Naive thymus-derived CD4-positive, alpha-beta T cell (primary cell): ENCODE measurements at regions of chr6 and their contacts with region 1.

Region 1: DNA sequence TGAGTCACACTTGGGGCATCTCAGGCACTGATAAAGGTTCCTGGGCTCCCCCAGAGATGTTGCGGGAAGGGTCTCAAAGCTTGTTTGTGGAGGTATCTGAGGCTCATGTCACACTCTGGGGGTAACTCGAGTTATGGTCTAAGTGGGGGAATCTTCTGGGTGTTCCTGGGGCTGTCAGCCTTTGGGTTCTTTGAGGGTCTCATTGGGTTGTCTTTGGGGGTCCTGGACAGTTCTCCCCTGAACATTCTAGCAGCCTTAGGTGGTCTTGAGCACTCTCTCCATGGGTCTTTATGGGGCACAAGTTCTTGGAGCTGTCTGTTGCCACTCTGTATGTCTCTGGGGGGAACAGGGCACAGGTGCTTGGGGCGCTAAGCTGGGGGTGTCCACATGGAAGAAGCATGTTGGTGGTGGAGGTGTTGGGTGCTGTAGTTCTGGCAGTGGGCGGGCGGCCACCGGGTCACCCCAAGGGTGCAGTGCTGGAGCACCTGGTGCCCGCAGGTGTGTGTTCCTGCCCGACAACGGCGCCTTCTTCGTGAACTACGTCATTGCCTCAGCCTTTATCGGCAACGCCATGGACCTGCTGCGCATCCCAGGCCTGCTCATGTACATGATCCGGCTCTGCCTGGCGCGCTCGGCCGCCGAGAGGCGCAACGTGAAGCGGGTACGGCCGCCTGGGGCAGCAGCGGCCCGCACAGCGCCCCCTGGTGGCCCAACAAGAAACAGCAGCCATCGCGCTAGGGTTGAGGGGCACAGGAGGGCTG is 7.1 kb upstream of the CAPN11 start:
- DNase-seq: peak; percentile 63 to 88 (median 73)
- ATAC-seq: peak; percentile 94
- H3K4me3 ChIP-seq: no peak overlapping the region
- H3K4me3 Mint-ChIP-seq: peak overlapping the region in 3 of 10 donors; percentile 30 to 42 (median 34)
- H3K27ac ChIP-seq: no peak overlapping the region
- H3K27ac Mint-ChIP-seq: peak overlapping the region in 3 of 9 donors; percentile 5 to 43 (median 34)
- H3K4me1 ChIP-seq: peaks cover 3 to 8% of the 10 kb centered on the region in 2 donors
- H3K4me1 Mint-ChIP-seq: peaks cover 0 to 7% (median 4%) of the 10 kb centered on the region in 7 donors
- H3K27me3 ChIP-seq: no peaks in the 10 kb centered on the region
- H3K27me3 Mint-ChIP-seq: no peaks in the 10 kb centered on the region

Region 2: GRCh38 chr6:44202453-44203279 is 51.1 kb after region 1 on chr6:
- CTCF ChIA-PET with region 1: no interaction called
- POLR2A ChIA-PET with region 1: no interaction called
- intact Hi-C with region 1: no loop called
- DNase-seq: no peak
- ATAC-seq: no peak
- H3K4me3 ChIP-seq: no peak overlapping the region
- H3K4me3 Mint-ChIP-seq: no peak overlapping the region
- H3K27ac ChIP-seq: no peak overlapping the region
- H3K27ac Mint-ChIP-seq: peak overlapping the region in 1 of 9 donors; percentile 62
- H3K4me1 ChIP-seq: no peaks in the 10 kb centered on the region
- H3K4me1 Mint-ChIP-seq: peaks cover 0 to 2% (median 0%) of the 10 kb centered on the region in 7 donors
- H3K27me3 ChIP-seq: no peaks in the 10 kb centered on the region
- H3K27me3 Mint-ChIP-seq: peaks cover 0 to 17% (median 5%) of the 10 kb centered on the region in 5 donors

Region 3: GRCh38 chr6:44338228-44339122 is 186.9 kb after region 1 on chr6:
- CTCF ChIA-PET with region 1: no interaction called
- POLR2A ChIA-PET with region 1: no interaction called
- intact Hi-C with region 1: loop called in 1 of 2 experiments (anchors 1 kb)
- DNase-seq: peak; percentile 43 to 67 (median 62)
- ATAC-seq: peak; percentile 92
- H3K4me3 ChIP-seq: no peak overlapping the region
- H3K4me3 Mint-ChIP-seq: no peak overlapping the region
- H3K27ac ChIP-seq: no peak overlapping the region
- H3K27ac Mint-ChIP-seq: no peak overlapping the region
- H3K4me1 ChIP-seq: no peaks in the 10 kb centered on the region
- H3K4me1 Mint-ChIP-seq: peaks cover 0 to 4% (median 0%) of the 10 kb centered on the region in 7 donors
- H3K27me3 ChIP-seq: no peaks in the 10 kb centered on the region
- H3K27me3 Mint-ChIP-seq: peaks cover 18 to 33% (median 24%) of the 10 kb centered on the region in 5 donors